Sigmoid colon (tissue), 7 donors: ENCODE measurements at regions of chr1 and their contacts with region 1.

Region 1: DNA sequence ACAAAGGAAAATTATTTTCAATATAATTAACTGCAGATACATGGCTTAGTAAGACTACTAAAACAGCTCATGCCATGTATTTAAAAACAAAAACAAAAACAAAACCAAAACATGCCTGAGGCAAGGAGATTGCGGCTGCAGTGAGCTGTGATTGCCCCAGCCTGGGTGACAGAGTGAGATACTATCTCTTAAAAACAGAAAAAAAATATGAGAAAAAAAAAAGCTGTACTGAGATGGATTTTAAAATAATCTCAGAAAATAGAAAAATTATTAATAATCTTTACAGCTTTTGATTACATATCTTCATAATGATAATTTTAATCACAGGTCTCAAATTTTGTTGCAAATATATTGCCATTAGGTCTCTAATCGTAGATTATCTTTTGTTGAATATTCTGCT is 24.0 kb upstream of the LIN9 start:
- DNase-seq: no peak
- H3K4me3 ChIP-seq: no peak overlapping the region
- H3K27ac ChIP-seq: no peak overlapping the region
- H3K4me1 ChIP-seq: no peaks in the 10 kb centered on the region
- H3K27me3 ChIP-seq: no peaks in the 10 kb centered on the region
- CTCF ChIP-seq: no peak
- EP300 ChIP-seq: no peak
- POLR2A ChIP-seq: no peak

Region 2: DNA sequence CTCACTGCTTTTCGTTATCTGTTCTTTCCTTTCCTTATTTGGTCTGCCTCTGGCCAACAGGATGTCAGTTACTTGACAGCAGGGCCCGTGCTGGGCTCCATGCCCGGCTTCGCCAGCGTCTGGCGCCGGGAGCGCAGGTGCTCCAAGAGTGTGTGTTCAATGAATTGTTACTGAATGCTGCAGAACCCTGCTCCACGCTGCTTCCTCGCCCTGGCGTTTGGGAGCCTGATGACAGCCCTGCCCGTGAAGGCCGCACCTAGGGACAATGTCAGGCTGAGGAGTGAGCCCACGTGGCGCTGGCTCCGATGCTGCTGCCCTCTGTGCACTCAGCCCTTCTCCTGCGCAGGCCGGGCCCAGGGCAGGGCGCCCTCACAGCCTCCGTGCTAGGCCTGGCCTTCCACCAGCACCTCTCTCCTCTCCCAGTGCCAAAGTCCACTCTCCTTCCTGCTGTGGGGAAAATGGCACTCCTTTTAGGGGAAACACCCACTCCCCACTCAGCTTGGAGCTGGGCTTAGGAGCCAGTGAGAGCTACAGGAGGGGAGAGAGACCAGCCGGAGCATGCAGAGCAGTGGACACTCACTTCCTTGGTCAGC is 197.8 kb before region 1 on chr1:
- intact Hi-C with region 1: loop called (anchors 10 kb)
- DNase-seq: peak; percentile 77
- H3K4me3 ChIP-seq: peak overlapping the region in 2 of 4 donors; percentile 15 to 28
- H3K27ac ChIP-seq: peak overlapping the region in 3 of 4 donors; percentile 14 to 54 (median 45)
- H3K4me1 ChIP-seq: peaks cover 0 to 20% (median 18%) of the 10 kb centered on the region in 4 donors
- H3K27me3 ChIP-seq: no peaks in the 10 kb centered on the region
- CTCF ChIP-seq: no peak
- EP300 ChIP-seq: no peak
- POLR2A ChIP-seq: no peak

Region 3: GRCh38 chr1:226201029-226201593 is 131.8 kb before region 1 on chr1:
- intact Hi-C with region 1: no loop called
- DNase-seq: no peak
- H3K4me3 ChIP-seq: no peak overlapping the region
- H3K27ac ChIP-seq: no peak overlapping the region
- H3K4me1 ChIP-seq: no peaks in the 10 kb centered on the region
- H3K27me3 ChIP-seq: no peaks in the 10 kb centered on the region
- CTCF ChIP-seq: no peak
- EP300 ChIP-seq: no peak
- POLR2A ChIP-seq: no peak